Mucosa of descending colon (tissue), 3 donors: ENCODE measurements at regions of chr12 and their contacts with region 1.

Region 1: DNA sequence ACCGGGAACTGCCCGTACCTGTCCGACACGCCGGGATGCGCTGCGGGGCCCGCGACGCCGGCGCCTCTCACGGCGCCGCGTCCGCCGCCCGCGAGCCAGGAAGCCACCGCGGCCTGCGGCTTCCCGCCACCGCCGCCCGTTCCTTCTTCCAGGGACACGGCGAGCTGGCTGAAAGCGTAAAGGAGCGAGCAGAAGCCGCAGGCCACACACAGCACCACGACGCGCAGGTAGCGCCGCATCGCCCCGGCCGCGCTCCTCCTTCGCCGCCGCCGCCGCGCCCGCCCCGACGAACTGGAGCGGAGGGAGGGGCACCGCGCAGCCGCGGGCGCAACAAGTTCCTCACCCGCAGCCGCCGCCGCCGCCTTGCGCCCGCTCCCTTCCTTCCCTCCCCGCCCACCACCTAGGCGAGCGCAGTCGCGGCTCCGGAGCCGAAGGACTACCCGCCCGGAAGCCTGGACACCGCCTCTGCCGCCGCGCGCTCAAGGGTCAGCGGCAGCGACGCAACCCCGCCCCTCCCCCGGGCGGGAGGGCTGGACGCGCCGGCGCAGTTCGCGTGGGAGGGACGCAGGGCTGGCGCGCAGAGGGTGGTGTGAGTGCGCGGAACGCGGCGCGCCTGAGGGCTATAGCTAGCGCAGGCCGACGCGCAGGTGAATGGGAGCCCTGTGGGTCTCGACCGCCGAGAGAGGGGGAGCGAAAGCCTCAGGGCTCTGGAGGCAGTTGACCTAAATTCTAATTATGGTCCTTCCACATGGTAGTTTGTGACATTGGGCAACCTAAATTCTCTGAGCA is at the start of gene GXYLT1:
- DNase-seq: peak; percentile 92 to 97 (median 95)
- ATAC-seq: peak; percentile 98
- H3K4me3 ChIP-seq: peak within 1 kb of the TSS; percentile 58
- H3K4me1 ChIP-seq: peaks cover 8% of the 10 kb centered on the region
- CTCF ChIP-seq: no peak
- total RNA-seq, gene GXYLT1: 7.4 to 8.8 (median 8.5) TPM

Region 2: GRCh38 chr12:42325653-42326474 is 181.3 kb after region 1 on chr12 and contains the starts of genes PPHLN1 and ZCRB1:
- intact Hi-C with region 1: loop called (anchors 10 kb)
- DNase-seq: peak; percentile 87 to 91 (median 90)
- ATAC-seq: peak; percentile 99
- H3K4me3 ChIP-seq: peak within 1 kb of the TSS; percentile 48
- H3K4me1 ChIP-seq: peaks cover 17% of the 10 kb centered on the region
- CTCF ChIP-seq: no peak
- total RNA-seq, gene PPHLN1: 43.7 to 50.6 (median 44.9) TPM
- total RNA-seq, gene ZCRB1: 31.4 to 43.3 (median 40.3) TPM